Calu3 (cell line): ENCODE measurements at regions of chr10 and their contacts with region 1.

Region 1: DNA sequence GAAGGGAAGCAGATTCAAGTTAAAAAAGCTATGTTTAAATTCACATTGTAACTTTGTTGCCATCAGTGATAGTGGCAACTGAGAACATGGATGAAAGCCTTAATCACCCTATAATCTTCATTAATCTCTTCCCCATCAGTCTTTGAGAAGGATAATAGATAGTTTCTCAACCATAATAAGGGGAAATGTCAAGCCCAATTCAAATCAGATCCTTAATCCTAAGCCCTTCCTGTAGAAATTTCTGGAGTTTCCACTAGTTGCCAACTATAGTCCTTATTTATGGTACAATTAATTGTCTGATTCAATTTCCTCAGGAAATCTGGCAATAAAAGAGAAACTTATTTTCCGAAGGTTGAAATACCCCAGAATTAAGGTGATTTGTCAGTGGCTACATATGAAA is 431.8 kb downstream of the ZWINT start:
- DNase-seq: no peak
- H3K4me3 Mint-ChIP-seq: no peak overlapping the region
- H3K27ac Mint-ChIP-seq: no peak overlapping the region
- H3K4me1 Mint-ChIP-seq: no peaks in the 10 kb centered on the region
- H3K27me3 Mint-ChIP-seq: no peaks in the 10 kb centered on the region
- CTCF ChIP-seq: no peak

Region 2: DNA sequence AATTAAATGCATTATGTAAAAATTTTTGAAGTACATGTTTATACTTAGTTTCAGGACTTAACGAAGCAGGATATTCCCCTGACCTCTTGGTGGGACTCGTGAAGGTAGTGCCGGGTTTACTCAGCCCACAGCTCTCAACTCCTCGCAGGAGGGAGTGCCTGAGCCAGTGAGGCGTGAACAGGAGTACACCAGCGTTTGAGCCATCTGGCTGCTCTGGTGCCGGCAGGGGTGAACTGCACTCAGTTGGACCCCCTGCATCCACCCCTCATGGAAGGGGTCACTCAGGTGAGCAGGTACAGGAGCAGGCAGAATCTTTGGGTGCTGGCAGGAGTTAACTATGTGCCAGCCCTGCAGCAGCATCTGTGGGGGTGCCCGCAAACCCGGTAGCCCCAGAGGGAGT is 503.2 kb before region 1 on chr10:
- CTCF ChIA-PET with region 1: no interaction called
- intact Hi-C with region 1: loop called (anchors 2 kb)
- DNase-seq: no peak
- H3K4me3 Mint-ChIP-seq: no peak overlapping the region
- H3K27ac Mint-ChIP-seq: no peak overlapping the region
- H3K4me1 Mint-ChIP-seq: peaks cover 8% of the 10 kb centered on the region
- H3K27me3 Mint-ChIP-seq: no peaks in the 10 kb centered on the region
- CTCF ChIP-seq: no peak

Region 3: DNA sequence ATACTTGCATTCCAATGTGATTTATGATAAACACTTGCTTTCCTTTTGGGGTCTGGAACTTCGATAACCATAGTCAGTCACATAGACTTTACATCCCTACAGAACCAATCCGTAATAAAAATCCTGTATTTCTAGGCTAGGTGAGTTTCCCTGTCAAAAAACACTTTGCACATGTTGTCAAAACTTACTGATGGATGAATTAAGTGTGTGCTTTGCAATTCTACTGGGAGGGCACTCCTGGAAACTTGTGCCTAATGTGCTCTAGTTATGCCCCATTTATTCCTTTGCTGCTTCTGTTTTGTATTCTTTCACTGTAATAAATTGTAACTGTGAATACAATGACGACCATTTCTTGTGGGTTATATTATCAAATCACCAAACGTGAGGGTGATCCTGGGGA is 443.5 kb before region 1 on chr10:
- CTCF ChIA-PET with region 1: no interaction called
- intact Hi-C with region 1: no loop called
- DNase-seq: no peak
- H3K4me3 Mint-ChIP-seq: no peak overlapping the region
- H3K27ac Mint-ChIP-seq: no peak overlapping the region
- H3K4me1 Mint-ChIP-seq: no peaks in the 10 kb centered on the region
- H3K27me3 Mint-ChIP-seq: no peaks in the 10 kb centered on the region
- CTCF ChIP-seq: no peak

Region 4: DNA sequence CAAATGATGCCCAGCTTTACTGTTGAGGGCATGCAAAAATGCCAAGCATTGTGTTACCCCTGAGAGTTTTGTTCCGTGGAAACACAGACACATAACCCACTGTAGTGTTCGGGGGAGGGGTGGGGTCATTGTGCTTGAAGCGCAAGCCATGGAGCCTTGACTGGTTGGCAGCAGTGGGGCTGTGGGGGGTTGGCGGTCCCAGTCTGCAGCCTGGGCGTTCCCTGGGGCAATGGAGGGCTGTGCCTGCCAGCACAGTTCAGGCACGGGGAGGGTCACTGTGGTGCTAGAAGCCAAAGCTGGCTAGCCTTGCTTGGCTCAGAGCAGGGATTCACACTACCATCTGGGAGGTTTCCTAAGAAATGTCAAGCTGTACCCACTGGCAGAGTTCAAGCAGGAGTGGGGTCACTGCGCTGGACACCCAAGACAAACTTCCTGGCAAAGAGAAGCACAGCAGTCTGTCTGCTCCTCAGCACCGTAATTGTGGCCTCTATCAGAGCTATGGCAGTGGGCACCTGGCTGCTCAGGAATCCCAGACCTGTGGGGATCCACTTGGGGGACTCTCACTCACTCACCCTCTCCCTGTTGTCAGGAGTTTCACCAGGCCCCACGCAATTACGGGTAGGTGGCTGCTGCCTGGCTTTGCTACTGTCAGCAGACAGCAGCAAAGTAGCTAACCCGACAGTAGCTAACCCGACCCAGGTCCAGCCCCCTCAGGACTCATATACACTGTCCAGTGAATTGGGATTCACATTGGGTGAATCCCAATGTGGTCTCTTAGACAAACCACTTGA is 139.4 kb after region 1 on chr10:
- CTCF ChIA-PET with region 1: no interaction called
- intact Hi-C with region 1: no loop called
- DNase-seq: no peak
- H3K4me3 Mint-ChIP-seq: no peak overlapping the region
- H3K27ac Mint-ChIP-seq: no peak overlapping the region
- H3K4me1 Mint-ChIP-seq: no peaks in the 10 kb centered on the region
- H3K27me3 Mint-ChIP-seq: no peaks in the 10 kb centered on the region
- CTCF ChIP-seq: no peak